PC-3 (cell line): ENCODE measurements at regions of chr5 and their contacts with region 1.

Region 1: DNA sequence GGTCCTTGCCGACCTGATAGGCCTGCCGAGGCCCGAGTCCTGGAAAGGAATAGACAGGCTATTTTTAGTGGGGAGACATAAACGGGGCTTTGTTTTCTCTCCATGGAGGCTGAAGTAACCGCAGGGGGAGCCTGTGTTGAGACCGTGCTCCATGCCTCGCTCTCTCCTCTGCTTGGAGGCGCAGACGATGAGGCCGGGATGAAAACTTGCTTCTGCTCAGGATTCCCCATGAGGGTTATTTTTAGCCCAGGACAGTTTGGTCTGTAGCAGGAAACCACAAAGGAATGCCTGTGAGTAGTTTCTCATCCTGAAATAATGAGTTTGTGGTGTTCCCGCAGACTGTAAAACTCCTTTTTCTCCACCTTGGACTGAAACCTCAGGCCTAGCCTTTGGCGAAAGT is 81.9 kb upstream of the RARS1 start:
- DNase-seq: peak; percentile 17
- ATAC-seq: no peak
- H3K4me3 ChIP-seq: no peak overlapping the region
- H3K27ac ChIP-seq: no peak overlapping the region
- H3K4me1 ChIP-seq: peaks cover 27% of the 10 kb centered on the region
- H3K27me3 ChIP-seq: no peaks in the 10 kb centered on the region
- CTCF ChIP-seq: no peak

Region 2: DNA sequence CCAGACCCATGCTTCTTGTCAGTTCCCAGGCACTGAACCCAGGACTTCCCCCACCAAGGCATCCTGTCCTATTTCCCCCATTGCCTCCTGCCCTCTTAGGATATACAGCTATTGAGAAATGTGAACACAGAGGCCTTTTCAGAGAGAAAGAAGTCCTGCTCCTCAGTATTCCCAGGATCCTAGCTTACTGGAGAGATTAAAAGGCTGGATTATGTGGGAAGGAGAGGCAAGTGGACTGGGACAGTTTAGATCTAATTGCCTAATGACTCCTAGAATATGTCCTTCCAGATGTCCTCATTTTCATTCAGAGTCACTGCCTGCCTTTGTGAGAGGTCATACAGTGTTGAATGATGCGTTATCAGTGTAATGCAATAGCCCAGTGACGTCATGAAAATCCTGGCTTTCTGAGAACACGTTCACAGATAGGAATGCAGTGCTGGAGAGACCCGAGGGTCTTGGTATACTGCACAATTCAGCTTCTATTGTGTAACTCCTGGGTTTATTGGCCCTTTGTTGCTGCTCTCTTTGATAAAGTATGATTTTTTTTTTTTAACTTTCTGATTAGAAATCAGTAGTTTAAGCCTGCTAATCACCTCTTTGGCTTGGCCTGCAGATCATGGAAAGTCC is 86.7 kb before region 1 on chr5:
- CTCF ChIA-PET with region 1: interaction called, 15 read pairs
- POLR2A ChIA-PET with region 1: no interaction called
- intact Hi-C with region 1: no loop called
- DNase-seq: peak; percentile 74
- ATAC-seq: no peak
- H3K4me3 ChIP-seq: no peak overlapping the region
- H3K27ac ChIP-seq: peak overlapping the region; percentile 42
- H3K4me1 ChIP-seq: peaks cover 50% of the 10 kb centered on the region
- H3K27me3 ChIP-seq: no peaks in the 10 kb centered on the region
- CTCF ChIP-seq: no peak